Activated naive CD4-positive, alpha-beta T cell treated with anti-CD3 and anti-CD28 coated beads for 36 hours (primary cell): ENCODE measurements at regions of chr1 and their contacts with region 1.

Region 1: GRCh38 chr1:217660353-217661062 is 29.4 kb downstream of the SPATA17 start:
- DNase-seq: no peak
- H3K4me3 Mint-ChIP-seq: no peak overlapping the region
- H3K27ac Mint-ChIP-seq: no peak overlapping the region
- H3K4me1 Mint-ChIP-seq: no peaks in the 10 kb centered on the region
- H3K27me3 Mint-ChIP-seq: peaks cover 7% of the 10 kb centered on the region

Region 2: GRCh38 chr1:217333939-217334338 is 326.6 kb before region 1 on chr1:
- CTCF ChIA-PET with region 1: no interaction called
- intact Hi-C with region 1: loop called (anchors 10 kb)
- DNase-seq: peak; percentile 6
- H3K4me3 Mint-ChIP-seq: no peak overlapping the region
- H3K27ac Mint-ChIP-seq: no peak overlapping the region
- H3K4me1 Mint-ChIP-seq: no peaks in the 10 kb centered on the region
- H3K27me3 Mint-ChIP-seq: no peaks in the 10 kb centered on the region